ENCODE measurements at regions of chr11 and their contacts with region 1.

Region 1: GRCh38 chr11:121451986-121452608 is at the start of gene SORL1:
- DNase-seq: peak; percentile 58 to 89 (median 80)
- ATAC-seq: peak; percentile 56
- H3K4me3 ChIP-seq: peak within 1 kb of the TSS; percentile 86 to 91
- H3K4me3 Mint-ChIP-seq: peak within 1 kb of the TSS; percentile 94
- H3K27ac ChIP-seq: peak within 1 kb of the TSS; percentile 74 to 86
- H3K27ac Mint-ChIP-seq: peak within 1 kb of the TSS; percentile 95
- H3K4me1 ChIP-seq: peaks cover 77% of the 10 kb centered on the region
- H3K4me1 Mint-ChIP-seq: peaks cover 89% of the 10 kb centered on the region
- H3K27me3 ChIP-seq: no peaks in the 10 kb centered on the region
- H3K27me3 Mint-ChIP-seq: no peaks in the 10 kb centered on the region
- CTCF ChIP-seq: peak; percentile 33
- total RNA-seq, gene SORL1: 170 TPM

Region 2: DNA sequence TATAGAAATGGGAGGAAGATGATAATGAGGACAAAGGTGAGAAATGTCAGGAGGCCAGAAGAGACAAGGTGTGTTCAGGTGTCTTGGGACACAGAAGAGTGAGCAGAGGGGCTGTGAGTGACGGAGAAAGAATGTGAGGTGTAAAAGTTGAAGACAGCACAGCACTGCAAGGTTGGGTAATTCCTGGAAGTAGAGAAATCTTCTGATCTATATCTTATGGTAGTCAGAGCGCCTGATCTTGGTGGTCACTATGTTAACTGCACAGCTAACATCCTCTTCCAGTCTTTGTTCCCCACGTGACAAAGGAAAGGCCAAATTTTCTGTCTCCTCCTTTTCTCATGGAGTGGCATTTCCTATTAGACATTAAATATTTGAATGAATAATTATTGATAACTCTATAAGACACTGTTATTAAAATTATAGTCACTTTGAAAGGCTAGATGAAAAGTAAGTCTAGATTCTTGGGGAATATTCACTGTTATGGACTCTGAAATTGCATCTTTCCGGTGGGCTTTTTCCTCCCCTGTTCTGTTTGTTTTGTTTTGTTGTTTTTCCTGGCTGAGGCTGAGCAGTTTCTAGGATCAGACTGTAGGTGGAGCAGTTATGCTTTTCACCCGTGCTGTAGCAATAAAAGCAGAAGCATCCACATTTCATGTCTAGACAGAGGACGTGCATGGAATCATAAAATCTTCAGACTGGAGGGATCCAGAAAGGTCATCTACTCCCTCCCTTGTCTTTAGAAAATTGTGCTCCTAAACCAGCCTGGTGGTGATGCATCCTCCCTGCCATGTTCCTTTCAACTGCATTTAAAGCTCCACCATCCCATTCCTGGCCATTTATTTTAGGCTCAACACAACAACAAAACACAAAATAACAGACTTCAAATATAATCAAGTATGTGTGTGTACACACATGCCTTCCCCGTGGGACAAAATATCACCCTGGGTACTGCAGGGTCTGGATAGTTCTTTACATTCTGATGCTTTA is 133.0 kb before region 1 on chr11:
- CTCF ChIA-PET with region 1: interaction called, 5 read pairs
- POLR2A ChIA-PET with region 1: interaction called, 6 read pairs
- intact Hi-C with region 1: loop called in 1 of 2 experiments (anchors 5 kb)
- DNase-seq: peak in 4 of 9 experiments; percentile 23 to 70 (median 44)
- ATAC-seq: peak; percentile 81
- H3K4me3 ChIP-seq: no peak overlapping the region
- H3K4me3 Mint-ChIP-seq: no peak overlapping the region
- H3K27ac ChIP-seq: no peak overlapping the region
- H3K27ac Mint-ChIP-seq: no peak overlapping the region
- H3K4me1 ChIP-seq: peaks cover 10% of the 10 kb centered on the region
- H3K4me1 Mint-ChIP-seq: peaks cover 19% of the 10 kb centered on the region
- H3K27me3 ChIP-seq: no peaks in the 10 kb centered on the region
- H3K27me3 Mint-ChIP-seq: peaks cover 2% of the 10 kb centered on the region
- CTCF ChIP-seq: peak; percentile 72

Region 3: DNA sequence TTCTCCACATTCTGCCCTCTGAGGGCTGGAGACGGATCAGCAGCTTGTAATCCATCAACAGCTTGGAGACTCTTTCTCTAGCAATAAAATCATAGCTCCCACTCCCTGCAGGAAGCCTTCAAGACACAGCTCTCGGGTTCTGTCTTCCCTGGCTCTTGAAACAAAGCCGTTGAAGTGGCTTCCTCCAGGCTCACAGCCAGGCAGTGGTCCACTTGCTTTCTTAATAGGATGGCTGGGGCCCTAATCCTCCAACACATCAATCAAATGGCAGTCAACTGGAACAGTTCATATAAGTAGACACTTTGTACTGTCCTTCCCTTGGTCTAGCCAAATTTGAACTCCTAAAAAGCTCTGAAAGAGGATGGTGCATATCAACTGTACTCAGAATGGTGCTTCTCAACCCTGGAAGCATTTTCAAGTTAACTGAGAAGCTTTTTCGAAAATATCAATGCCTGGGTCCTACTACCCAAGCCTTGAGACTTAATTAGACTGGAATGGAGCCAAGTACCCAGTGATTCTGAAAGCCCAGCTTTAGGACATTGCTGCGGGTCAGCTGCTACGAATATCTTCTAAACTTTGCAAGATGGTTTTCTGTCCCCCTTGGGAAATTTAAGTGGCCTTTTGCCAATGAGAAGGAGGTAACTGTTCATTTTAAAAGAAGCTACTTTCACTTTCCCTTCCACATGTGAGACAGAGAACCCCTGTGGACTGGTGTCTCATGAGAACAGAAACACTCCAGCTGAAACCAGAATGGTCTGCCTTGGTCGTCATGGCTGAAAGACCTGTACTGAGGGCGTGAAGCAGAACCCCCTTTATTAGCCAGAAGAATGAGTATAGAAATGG is 84.9 kb before region 1 on chr11:
- CTCF ChIA-PET with region 1: interaction called, 6 read pairs
- POLR2A ChIA-PET with region 1: interaction called, 12 read pairs
- intact Hi-C with region 1: no loop called
- DNase-seq: peak in 6 of 9 experiments; percentile 6 to 76 (median 38)
- ATAC-seq: peak; percentile 79
- H3K4me3 ChIP-seq: peak overlapping the region; percentile 17 to 36
- H3K4me3 Mint-ChIP-seq: peak overlapping the region; percentile 78
- H3K27ac ChIP-seq: peak overlapping the region; percentile 12 to 46
- H3K27ac Mint-ChIP-seq: peak overlapping the region; percentile 91
- H3K4me1 ChIP-seq: peaks cover 18% of the 10 kb centered on the region
- H3K4me1 Mint-ChIP-seq: peaks cover 35% of the 10 kb centered on the region
- H3K27me3 ChIP-seq: no peaks in the 10 kb centered on the region
- H3K27me3 Mint-ChIP-seq: no peaks in the 10 kb centered on the region
- CTCF ChIP-seq: no peak

Region 4: DNA sequence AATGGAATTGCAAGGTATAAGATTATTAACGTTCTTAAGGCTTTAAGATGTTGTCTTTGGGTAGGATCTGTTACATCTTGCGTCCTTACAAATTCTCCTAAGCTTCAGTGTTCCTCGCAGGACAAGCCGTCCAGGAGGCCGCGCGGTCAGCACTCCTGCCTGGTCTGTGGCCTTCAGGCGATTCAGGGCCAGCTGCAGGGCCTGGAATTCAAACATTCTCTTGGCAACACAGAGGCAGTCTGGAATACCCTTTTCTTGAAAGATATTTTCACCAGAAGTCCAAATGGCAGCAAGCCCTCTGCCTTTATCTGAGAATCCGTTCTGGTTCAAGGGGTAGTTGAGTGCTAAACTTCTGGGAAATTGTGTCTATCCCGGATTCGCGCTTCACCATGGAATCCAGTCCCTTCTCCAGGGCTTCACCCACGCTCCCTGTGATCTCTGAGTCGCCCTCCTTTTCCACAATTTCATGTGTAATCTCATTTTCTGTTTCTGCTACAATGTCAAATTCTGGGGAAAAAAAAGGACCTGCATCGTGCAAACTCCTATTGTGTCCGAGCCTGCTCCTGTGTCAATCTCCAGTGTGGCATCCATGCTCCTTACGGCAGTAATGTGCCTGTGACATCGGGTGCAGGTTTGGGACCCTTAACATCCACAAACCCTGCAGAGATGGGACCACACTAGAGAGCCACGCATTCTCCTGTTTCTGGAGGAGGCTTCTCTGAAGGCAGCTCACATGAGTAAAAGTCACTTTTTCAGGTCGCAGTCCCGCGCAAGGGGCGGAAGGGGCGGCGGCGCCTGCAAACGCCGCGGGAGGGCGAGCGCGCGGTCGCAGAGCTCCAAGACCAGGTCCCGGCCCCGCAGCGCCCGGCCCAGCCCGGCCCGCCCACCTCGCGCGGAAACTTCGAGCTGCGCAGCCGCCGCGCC is 25.4 kb before region 1 on chr11:
- CTCF ChIA-PET with region 1: interaction called, 6 read pairs
- POLR2A ChIA-PET with region 1: interaction called, 38 read pairs
- intact Hi-C with region 1: loop called in 1 of 2 experiments (anchors 2 kb)
- DNase-seq: peak in 8 of 9 experiments; percentile 33 to 76 (median 58)
- ATAC-seq: peak; percentile 72
- H3K4me3 ChIP-seq: peak overlapping the region; percentile 10 to 38
- H3K4me3 Mint-ChIP-seq: peak overlapping the region; percentile 77
- H3K27ac ChIP-seq: no peak overlapping the region
- H3K27ac Mint-ChIP-seq: no peak overlapping the region
- H3K4me1 ChIP-seq: peaks cover 20% of the 10 kb centered on the region
- H3K4me1 Mint-ChIP-seq: peaks cover 46% of the 10 kb centered on the region
- H3K27me3 ChIP-seq: no peaks in the 10 kb centered on the region
- H3K27me3 Mint-ChIP-seq: no peaks in the 10 kb centered on the region
- CTCF ChIP-seq: peak; percentile 11

Region 5: DNA sequence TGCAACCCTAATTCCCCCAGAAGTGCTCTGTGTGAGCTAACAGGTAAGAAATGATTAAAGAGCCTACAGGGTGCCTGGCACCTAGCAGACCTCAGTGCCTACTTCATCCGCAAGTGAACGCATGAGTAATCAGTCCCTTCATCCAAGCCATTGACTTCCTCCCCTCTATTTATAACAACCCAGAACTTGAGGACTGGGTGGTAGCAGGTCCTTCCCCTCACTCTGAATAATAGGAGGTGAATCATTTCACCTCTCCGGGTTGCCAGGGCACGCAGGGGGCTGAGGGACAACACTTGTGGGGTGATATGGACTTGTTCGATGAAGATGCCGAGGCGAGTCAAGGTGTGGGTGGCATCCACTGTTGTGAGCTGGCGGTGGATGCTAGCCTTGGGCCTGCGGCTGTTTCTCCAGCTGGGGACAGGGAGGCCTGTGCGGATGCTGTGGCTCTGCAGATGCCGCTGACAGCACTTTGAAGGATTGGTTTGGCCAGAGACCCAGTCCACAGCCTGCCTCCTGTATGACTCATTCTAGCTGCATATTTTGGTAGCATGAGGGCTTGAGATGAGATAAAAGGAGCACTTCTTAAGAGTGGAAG is 12.4 kb after region 1 on chr11:
- CTCF ChIA-PET with region 1: interaction called, 10 read pairs
- POLR2A ChIA-PET with region 1: interaction called, 178 read pairs
- intact Hi-C with region 1: loop called (anchors 1 kb)
- DNase-seq: peak in 8 of 9 experiments; percentile 60 to 85 (median 80)
- ATAC-seq: peak; percentile 71
- H3K4me3 ChIP-seq: peak overlapping the region; percentile 4 to 5
- H3K4me3 Mint-ChIP-seq: peak overlapping the region; percentile 59
- H3K27ac ChIP-seq: peak overlapping the region; percentile 35 to 68
- H3K27ac Mint-ChIP-seq: peak overlapping the region; percentile 97
- H3K4me1 ChIP-seq: peaks cover 99% of the 10 kb centered on the region
- H3K4me1 Mint-ChIP-seq: peaks cover 95% of the 10 kb centered on the region
- H3K27me3 ChIP-seq: no peaks in the 10 kb centered on the region
- H3K27me3 Mint-ChIP-seq: no peaks in the 10 kb centered on the region
- CTCF ChIP-seq: no peak

Region 6: GRCh38 chr11:121544956-121545355 is 92.9 kb after region 1 on chr11:
- CTCF ChIA-PET with region 1: interaction called, 3 read pairs
- POLR2A ChIA-PET with region 1: interaction called, 22 read pairs
- intact Hi-C with region 1: loop called in 1 of 2 experiments (anchors 5 kb)
- DNase-seq: peak in 8 of 9 experiments; percentile 13 to 65 (median 34)
- ATAC-seq: peak; percentile 90
- H3K4me3 ChIP-seq: no peak overlapping the region
- H3K4me3 Mint-ChIP-seq: peak overlapping the region; percentile 49
- H3K27ac ChIP-seq: peak overlapping the region in 1 of 2 experiments; percentile 47
- H3K27ac Mint-ChIP-seq: peak overlapping the region; percentile 93
- H3K4me1 ChIP-seq: peaks cover 39% of the 10 kb centered on the region
- H3K4me1 Mint-ChIP-seq: peaks cover 54% of the 10 kb centered on the region
- H3K27me3 ChIP-seq: no peaks in the 10 kb centered on the region
- H3K27me3 Mint-ChIP-seq: no peaks in the 10 kb centered on the region
- CTCF ChIP-seq: no peak